Activated CD4-positive, alpha-beta T cell treated with anti-CD3 and anti-CD28 coated beads, Interleukin-2, amount 10 ng/mL, durations not matched to agents 24 days and 14 days (primary cell): ENCODE measurements at regions of chr15 and their contacts with region 1.

Region 1: GRCh38 chr15:69058830-69059556 is 44.5 kb downstream of the NOX5 start:
- DNase-seq: peak; percentile 91
- H3K4me3 Mint-ChIP-seq: no peak overlapping the region
- H3K27ac Mint-ChIP-seq: no peak overlapping the region
- H3K4me1 Mint-ChIP-seq: peaks cover 10% of the 10 kb centered on the region
- H3K27me3 Mint-ChIP-seq: peaks cover 7% of the 10 kb centered on the region

Region 2: DNA sequence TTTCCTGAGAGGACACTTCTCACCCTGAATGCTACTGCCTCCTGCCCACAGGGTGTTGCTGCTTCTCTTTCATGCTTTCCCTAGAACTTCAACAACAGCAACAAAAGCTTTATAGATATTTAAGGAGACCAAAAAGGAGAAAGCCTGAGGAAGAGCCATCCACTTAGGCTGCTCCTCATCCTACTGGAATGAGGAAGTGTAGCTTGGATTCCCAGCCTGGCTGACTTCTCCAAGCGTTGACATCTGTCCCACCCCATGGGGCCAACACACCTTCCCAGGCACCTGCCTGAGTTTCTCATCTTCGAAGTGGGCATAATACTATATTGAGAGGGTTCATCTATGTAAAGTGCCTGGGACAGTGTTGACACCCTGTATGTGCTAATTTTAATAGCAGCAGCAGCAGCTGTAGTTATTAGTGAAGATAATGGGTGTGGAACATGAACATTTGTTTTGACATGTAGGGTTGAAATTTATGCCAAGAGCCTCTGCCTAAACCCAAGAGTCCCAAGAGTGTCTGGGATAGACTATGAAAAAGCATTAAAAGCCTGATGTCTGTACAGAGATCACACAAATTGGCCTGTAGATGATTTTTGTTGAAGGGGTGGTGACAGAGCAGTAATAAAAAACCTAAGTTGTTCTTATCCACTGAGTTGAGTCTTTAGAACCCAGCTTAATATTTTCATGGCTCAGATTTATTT is 1101.4 kb before region 1 on chr15:
- intact Hi-C with region 1: no loop called
- DNase-seq: no peak
- H3K4me3 Mint-ChIP-seq: no peak overlapping the region
- H3K27ac Mint-ChIP-seq: no peak overlapping the region
- H3K4me1 Mint-ChIP-seq: peaks cover 6% of the 10 kb centered on the region
- H3K27me3 Mint-ChIP-seq: peaks cover 20% of the 10 kb centered on the region

Region 3: DNA sequence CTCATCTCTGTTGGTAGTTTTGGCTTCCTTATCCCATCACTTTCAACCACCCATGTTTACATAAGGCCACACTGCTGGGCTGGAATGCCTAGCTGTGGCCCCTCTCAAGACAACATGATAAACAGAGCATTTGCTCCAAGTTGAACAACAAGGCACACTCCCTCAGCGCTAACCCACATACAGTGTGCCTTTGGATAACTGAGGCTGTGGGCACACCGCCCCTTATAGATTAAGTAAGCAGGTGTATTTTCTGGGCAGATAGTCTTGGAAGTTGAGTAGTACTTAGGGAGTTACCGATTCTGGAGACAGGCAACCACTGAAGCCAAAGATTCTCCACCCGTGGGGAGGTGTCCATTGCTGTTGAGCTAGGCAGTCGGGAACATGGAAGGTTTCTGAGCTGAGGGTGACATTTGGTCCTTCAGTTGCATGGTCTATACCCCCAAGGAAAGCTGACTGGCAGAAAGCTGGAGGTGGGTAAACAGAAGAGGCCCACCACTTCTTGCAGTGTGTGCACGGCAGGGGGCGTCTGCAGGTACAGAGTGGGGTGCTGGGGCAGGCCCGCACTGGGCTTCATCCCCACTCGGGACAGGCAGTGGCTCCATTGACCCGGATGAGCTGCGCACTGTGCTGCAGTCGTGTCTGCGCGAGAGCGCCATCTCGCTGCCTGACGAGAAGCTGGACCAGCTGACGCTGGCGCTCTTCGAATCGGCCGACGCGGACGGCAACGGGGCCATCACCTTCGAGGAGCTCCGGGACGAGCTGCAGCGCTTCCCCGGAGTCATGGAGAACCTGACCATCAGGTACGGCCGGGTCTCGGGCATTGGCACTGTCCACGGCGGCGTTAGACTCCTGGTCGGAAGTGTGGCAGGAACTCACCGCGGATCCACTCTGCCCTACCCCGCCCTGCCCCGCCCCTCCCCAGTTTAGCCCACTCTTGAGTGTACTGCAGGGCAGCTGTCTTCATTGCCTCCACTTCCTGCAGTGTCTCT is 27.7 kb before region 1 on chr15:
- intact Hi-C with region 1: no loop called
- DNase-seq: peak; percentile 78
- H3K4me3 Mint-ChIP-seq: peak overlapping the region; percentile 57
- H3K27ac Mint-ChIP-seq: no peak overlapping the region
- H3K4me1 Mint-ChIP-seq: peaks cover 6% of the 10 kb centered on the region
- H3K27me3 Mint-ChIP-seq: peaks cover 10% of the 10 kb centered on the region

Region 4: DNA sequence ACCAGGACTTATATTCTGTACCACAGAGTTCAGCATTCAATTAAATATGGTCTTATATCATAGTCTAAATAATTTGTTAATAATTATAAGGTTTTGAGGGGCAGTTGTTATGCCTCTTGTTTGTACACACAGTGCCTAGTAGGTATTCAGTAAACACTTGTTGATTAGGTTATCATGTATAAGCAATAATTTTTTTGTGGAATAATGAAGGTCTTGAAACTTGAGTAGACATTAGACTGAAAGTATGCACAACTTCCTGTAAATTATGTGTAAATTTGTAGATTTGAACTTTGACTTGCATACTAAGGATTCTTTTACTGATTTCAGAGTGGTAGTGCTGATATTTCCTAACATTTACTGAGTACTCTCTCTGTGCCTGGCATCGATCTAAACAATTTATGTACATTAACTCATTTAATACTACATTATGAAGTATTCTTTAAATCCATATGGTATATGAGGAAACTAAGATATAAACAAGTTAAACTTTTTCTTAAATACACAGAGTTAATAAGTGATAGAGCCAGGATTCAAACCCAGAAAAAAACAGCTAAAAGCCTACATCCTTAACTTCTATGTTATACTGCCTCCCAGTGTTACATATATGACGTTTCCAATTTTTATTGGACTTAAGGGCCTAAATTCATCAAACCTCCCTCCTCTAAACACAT is 166.5 kb after region 1 on chr15:
- intact Hi-C with region 1: loop called (anchors 10 kb)
- DNase-seq: no peak
- H3K4me3 Mint-ChIP-seq: no peak overlapping the region
- H3K27ac Mint-ChIP-seq: no peak overlapping the region
- H3K4me1 Mint-ChIP-seq: no peaks in the 10 kb centered on the region
- H3K27me3 Mint-ChIP-seq: peaks cover 6% of the 10 kb centered on the region

Region 5: DNA sequence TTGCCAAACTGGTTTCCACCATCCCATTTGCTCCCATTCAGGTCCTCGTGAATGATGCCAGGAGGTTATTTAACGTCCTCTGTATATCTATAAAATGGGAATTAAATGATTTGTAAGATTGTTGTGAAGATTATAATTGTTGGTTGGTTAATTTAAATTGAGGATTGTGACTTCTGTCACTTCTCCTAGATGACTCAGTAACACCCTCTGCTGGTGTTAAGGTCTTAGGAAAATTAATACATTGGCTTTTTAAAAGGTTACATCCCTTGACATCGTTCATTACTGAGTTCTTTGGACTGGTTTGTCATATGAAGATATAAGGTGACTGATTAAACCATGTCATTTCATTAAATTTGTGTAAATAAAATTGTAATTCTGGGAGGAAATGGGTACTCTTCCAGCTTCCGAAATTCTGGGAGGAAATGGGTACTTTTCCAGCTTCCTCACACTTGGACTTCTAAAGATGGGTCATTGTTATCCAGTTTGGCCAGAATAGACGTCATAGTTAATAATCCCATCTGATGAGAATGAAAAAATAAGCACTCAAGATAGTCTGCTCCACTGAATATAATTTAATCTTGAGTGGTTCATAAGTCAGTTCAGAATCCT is 206.5 kb after region 1 on chr15:
- intact Hi-C with region 1: loop called (anchors 1 kb)
- DNase-seq: no peak
- H3K4me3 Mint-ChIP-seq: no peak overlapping the region
- H3K27ac Mint-ChIP-seq: no peak overlapping the region
- H3K4me1 Mint-ChIP-seq: no peaks in the 10 kb centered on the region
- H3K27me3 Mint-ChIP-seq: no peaks in the 10 kb centered on the region

Region 6: GRCh38 chr15:69394556-69395282 is 335.7 kb after region 1 on chr15:
- intact Hi-C with region 1: loop called (anchors 1 kb)
- DNase-seq: peak; percentile 95
- H3K4me3 Mint-ChIP-seq: peak overlapping the region; percentile 31
- H3K27ac Mint-ChIP-seq: no peak overlapping the region
- H3K4me1 Mint-ChIP-seq: peaks cover 9% of the 10 kb centered on the region
- H3K27me3 Mint-ChIP-seq: peaks cover 10% of the 10 kb centered on the region

Region 7: DNA sequence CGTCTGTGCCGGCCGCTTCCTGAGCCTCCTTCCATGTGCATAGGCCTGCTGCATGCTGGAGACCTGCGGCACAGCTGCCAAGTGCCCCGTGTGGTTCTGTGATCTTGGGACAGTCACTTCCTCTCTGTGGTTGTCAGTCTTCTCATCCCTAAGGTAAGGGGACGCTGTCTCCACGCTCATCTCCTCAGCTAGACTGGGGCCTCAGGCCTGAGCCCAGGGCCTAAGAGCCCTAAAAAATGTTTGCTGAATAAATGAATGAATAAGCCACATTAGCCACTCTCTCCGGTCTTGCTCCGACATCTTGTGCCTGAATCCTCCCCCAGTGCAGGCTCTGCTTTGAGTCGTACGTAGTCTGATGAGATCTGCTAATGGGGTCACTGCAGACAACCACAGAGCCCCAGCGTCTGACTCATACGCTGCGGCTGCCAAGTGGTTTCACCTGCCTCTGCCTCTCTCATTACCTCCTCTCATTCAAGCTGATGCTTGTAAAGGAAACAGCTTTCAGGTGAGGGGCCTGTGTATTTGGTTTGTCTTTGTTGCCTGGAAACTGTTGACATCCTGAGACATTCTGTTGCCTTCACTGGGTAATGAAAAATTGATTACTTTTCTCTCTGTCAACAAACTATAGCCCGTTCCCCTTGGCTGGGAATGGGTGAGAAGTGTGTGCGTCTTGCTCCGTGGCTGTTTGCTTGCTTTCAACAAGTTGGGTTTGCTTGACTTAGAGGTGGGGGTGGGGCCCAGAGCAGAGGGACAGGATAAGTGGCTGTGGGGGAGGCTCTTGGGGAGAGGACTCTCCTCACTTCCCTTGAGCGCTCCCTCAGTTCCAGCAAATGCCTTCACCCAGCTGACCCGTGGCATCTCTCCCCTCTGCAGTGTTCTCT is 409.5 kb after region 1 on chr15:
- intact Hi-C with region 1: loop called (anchors 1 kb)
- DNase-seq: peak; percentile 93
- H3K4me3 Mint-ChIP-seq: peak overlapping the region; percentile 51
- H3K27ac Mint-ChIP-seq: peak overlapping the region; percentile 79
- H3K4me1 Mint-ChIP-seq: peaks cover 24% of the 10 kb centered on the region
- H3K27me3 Mint-ChIP-seq: peaks cover 17% of the 10 kb centered on the region